K562 (cell line): ENCODE measurements at regions of chr12 and their contacts with region 1.

Region 1: DNA sequence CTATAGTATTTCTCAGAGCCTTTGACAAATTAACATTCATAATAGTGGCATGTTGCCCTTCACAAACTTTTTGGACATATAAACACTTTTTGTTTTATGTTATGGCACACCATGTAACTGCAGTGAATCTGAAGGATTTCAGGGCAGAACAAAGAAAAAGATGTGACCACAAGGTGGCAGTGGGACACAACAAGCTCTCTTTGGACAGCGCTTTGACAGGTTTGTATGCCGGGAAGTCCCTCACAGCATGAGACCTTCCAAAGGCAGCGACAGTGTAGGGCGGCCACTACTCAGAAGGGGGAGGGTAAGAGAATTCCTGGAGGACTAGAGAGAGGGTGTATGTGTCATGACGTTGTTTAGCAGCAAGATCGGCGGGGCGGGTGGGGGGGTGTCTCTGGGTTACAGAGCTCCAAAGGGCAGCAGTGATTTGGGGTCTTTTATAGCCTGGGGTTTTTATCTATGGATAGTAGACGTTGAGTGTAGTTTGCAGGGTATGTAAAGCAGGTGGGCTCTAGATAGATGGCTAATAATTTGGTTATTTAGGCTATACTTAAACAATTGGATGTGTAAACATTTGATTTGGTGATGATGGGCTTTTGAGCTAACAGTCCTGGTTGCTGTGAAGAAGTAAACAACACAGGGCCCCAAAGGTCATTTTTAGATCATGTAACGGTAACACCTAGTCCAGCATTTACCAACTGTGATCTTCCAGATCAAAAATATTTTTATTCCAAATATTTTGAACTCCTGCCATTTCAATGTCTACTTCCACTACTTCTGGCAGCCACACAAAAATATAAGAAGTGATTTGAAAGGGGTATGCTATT is 22.9 kb downstream of the ETFBKMT start:
- DNase-seq: peak; percentile 72 to 92 (median 75)
- ATAC-seq: peak; percentile 100
- H3K4me3 ChIP-seq: no peak overlapping the region
- H3K27ac ChIP-seq: no peak overlapping the region
- H3K4me1 ChIP-seq: no peaks in the 10 kb centered on the region
- H3K27me3 ChIP-seq: no peaks in the 10 kb centered on the region
- CTCF ChIP-seq: peak; percentile 81 to 88 (median 86)
- EP300 ChIP-seq: peak; percentile 12; the same call in 1 of the 2 replicates
- POLR2A ChIP-seq: no peak
- RAD21 ChIP-seq: peak; percentile 97 to 99

Region 2: GRCh38 chr12:31603546-31604009 is 78.8 kb before region 1 on chr12:
- CTCF ChIA-PET with region 1: no interaction called
- POLR2A ChIA-PET with region 1: no interaction called
- in situ Hi-C with region 1: no loop called
- intact Hi-C with region 1: no loop called
- DNase-seq: no peak
- ATAC-seq: no peak
- H3K4me3 ChIP-seq: no peak overlapping the region
- H3K27ac ChIP-seq: no peak overlapping the region
- H3K4me1 ChIP-seq: no peaks in the 10 kb centered on the region
- H3K27me3 ChIP-seq: no peaks in the 10 kb centered on the region
- CTCF ChIP-seq: no peak
- EP300 ChIP-seq: no peak
- POLR2A ChIP-seq: no peak
- RAD21 ChIP-seq: no peak

Region 3: DNA sequence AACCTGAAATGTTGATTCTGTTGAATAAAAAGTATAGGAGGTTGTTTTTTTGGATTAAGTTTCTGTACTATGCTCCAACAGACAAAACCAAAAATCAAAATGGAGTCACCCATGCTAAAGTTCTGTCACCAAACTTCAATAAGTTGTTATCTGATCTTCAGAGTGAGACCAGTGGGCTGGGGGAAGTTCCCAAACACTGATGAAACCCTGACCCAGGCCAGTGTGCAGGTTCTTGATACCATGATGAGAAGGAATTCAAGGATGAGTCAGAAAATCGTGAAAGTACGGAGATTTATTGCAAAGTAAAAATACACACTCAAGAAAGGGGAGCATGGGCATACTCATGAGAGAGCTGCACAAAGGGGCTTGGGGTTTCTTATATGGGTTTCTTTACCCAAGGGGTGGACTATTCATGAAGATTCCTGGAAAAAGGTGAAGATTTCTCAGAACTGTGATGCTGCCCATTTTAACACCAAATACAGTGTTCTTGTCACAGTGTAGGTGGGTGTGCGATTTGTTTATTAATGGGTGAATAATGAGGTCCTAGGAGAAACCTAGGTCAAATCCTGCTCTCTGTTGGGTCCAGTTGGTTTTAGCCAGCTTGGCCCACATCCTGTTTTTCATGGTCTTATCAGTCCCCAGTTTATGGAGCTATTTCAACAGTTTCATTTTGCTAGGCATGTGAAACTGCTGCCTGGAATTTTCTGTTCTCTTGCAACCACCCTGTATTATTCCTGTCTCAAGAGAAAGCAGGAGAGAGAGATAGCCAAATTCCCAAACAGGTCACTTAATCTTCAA is 63.9 kb before region 1 on chr12:
- CTCF ChIA-PET with region 1: no interaction called
- POLR2A ChIA-PET with region 1: no interaction called
- in situ Hi-C with region 1: no loop called
- intact Hi-C with region 1: no loop called
- DNase-seq: peak in 1 of 4 experiments; percentile 43
- ATAC-seq: peak; percentile 32
- H3K4me3 ChIP-seq: no peak overlapping the region
- H3K27ac ChIP-seq: no peak overlapping the region
- H3K4me1 ChIP-seq: peaks cover 0 to 12% of the 10 kb centered on the region in 2 experiments; a peak in 3 of 5 replicates
- H3K27me3 ChIP-seq: no peaks in the 10 kb centered on the region
- CTCF ChIP-seq: no peak
- EP300 ChIP-seq: no peak; the same call in none of the 2 replicates
- POLR2A ChIP-seq: no peak
- RAD21 ChIP-seq: peak in 1 of 2 experiments; percentile 35; a peak in 1 of 4 replicates

Region 4: GRCh38 chr12:31705621-31706020 is 23.3 kb after region 1 on chr12:
- CTCF ChIA-PET with region 1: no interaction called
- POLR2A ChIA-PET with region 1: no interaction called
- in situ Hi-C with region 1: no loop called
- intact Hi-C with region 1: no loop called
- DNase-seq: no peak
- ATAC-seq: no peak
- H3K4me3 ChIP-seq: no peak overlapping the region
- H3K27ac ChIP-seq: no peak overlapping the region
- H3K4me1 ChIP-seq: no peaks in the 10 kb centered on the region
- H3K27me3 ChIP-seq: no peaks in the 10 kb centered on the region
- CTCF ChIP-seq: no peak
- EP300 ChIP-seq: no peak
- POLR2A ChIP-seq: no peak
- RAD21 ChIP-seq: no peak

Region 5: GRCh38 chr12:31728917-31729640 is 46.7 kb after region 1 on chr12 and contains the start of gene AMN1:
- CTCF ChIA-PET with region 1: no interaction called
- POLR2A ChIA-PET with region 1: no interaction called
- in situ Hi-C with region 1: no loop called
- intact Hi-C with region 1: loop called (anchors 1 kb)
- DNase-seq: peak; percentile 92 to 100 (median 95)
- ATAC-seq: peak; percentile 89
- H3K4me3 ChIP-seq: peak within 1 kb of the TSS; percentile 70
- H3K27ac ChIP-seq: peak within 1 kb of the TSS; percentile 94
- H3K4me1 ChIP-seq: peaks cover 14 to 48% of the 10 kb centered on the region in 2 experiments
- H3K27me3 ChIP-seq: no peaks in the 10 kb centered on the region
- CTCF ChIP-seq: peak in 1 of 3 experiments; percentile 18; a peak in 1 of 6 replicates
- EP300 ChIP-seq: 0 out of 2 replicates have a peak, but pooled peaks have one; percentile 4
- POLR2A ChIP-seq: peak; percentile 87
- RAD21 ChIP-seq: peak; percentile 19 to 22; a peak in 3 of 4 replicates
- polyA plus RNA-seq, gene AMN1: 26.9 to 27.6 TPM

Region 6: DNA sequence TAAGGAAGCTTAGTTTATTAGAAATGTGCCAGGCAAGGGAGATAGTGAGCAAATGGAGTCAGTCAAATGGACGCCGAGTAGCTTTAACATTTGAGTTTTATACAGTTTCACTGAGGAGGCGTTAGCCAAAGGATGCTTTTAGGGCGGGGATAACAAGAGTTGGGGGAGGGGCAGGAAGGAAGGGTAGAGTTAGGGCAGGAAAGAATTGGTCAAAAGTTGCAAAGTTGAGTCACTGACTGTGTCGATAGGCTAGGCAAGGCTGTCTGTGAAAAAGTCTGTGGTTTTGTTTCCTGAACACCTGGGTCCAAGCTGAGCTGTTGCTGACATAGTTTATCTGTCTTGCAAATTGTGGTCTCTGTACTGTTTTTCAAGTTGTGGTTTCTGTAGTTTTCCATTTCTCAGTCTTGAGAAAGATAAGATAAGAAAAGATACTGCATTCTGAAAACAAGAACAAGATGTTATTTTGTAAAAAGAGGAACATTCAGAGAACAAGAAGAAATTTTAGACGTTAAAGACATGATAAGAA is 214.2 kb after region 1 on chr12:
- CTCF ChIA-PET with region 1: no interaction called
- POLR2A ChIA-PET with region 1: no interaction called
- in situ Hi-C with region 1: no loop called
- intact Hi-C with region 1: loop called (anchors 10 kb)
- DNase-seq: peak; percentile 42 to 84 (median 60)
- ATAC-seq: peak; percentile 84
- H3K4me3 ChIP-seq: no peak overlapping the region
- H3K27ac ChIP-seq: peak overlapping the region; percentile 27; the same call in 2 of the 3 replicates
- H3K4me1 ChIP-seq: peaks cover 19 to 21% of the 10 kb centered on the region in 2 experiments
- H3K27me3 ChIP-seq: no peaks in the 10 kb centered on the region
- CTCF ChIP-seq: no peak
- EP300 ChIP-seq: peak; percentile 83
- POLR2A ChIP-seq: no peak
- RAD21 ChIP-seq: peak; percentile 24 to 45; a peak in 3 of 4 replicates

Region 7: GRCh38 chr12:32049960-32050359 is 367.6 kb after region 1 on chr12:
- CTCF ChIA-PET with region 1: no interaction called
- POLR2A ChIA-PET with region 1: no interaction called
- in situ Hi-C with region 1: no loop called
- intact Hi-C with region 1: loop called (anchors 5 kb)
- DNase-seq: no peak
- ATAC-seq: no peak
- H3K4me3 ChIP-seq: no peak overlapping the region
- H3K27ac ChIP-seq: no peak overlapping the region
- H3K4me1 ChIP-seq: peaks cover 18 to 35% of the 10 kb centered on the region in 2 experiments
- H3K27me3 ChIP-seq: no peaks in the 10 kb centered on the region
- CTCF ChIP-seq: no peak
- EP300 ChIP-seq: no peak
- POLR2A ChIP-seq: no peak
- RAD21 ChIP-seq: no peak

Region 8: DNA sequence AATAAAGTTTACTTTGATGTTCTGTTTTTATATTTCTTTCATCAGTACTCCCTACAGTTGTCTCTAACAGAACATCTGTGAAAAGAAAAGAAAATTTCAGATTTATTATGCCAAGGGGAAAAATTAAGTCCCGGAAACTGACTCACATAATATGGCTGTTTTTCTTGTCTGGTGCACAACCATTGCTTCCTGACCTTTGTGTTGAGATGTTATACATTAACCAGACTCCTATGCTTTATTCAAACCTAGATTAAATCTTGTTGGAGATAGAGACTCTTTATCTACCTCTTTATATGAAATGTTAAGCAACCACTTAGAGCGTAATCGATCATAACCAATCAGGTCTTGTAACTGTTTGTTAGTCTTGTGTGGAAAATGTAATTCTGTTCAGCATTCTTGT is 386.7 kb after region 1 on chr12:
- CTCF ChIA-PET with region 1: no interaction called
- POLR2A ChIA-PET with region 1: no interaction called
- in situ Hi-C with region 1: no loop called
- intact Hi-C with region 1: no loop called
- DNase-seq: no peak
- ATAC-seq: no peak
- H3K4me3 ChIP-seq: no peak overlapping the region
- H3K27ac ChIP-seq: no peak overlapping the region
- H3K4me1 ChIP-seq: no peaks in the 10 kb centered on the region
- H3K27me3 ChIP-seq: no peaks in the 10 kb centered on the region
- CTCF ChIP-seq: no peak
- EP300 ChIP-seq: no peak
- POLR2A ChIP-seq: no peak
- RAD21 ChIP-seq: no peak

Region 9: GRCh38 chr12:32312049-32312670 is 629.8 kb after region 1 on chr12:
- CTCF ChIA-PET with region 1: interaction called, 7 read pairs
- POLR2A ChIA-PET with region 1: no interaction called
- in situ Hi-C with region 1: loop called (anchors 10 kb)
- intact Hi-C with region 1: loop called (anchors 2 kb)
- DNase-seq: peak in 2 of 4 experiments; percentile 37 to 60
- ATAC-seq: peak; percentile 73
- H3K4me3 ChIP-seq: no peak overlapping the region
- H3K27ac ChIP-seq: no peak overlapping the region
- H3K4me1 ChIP-seq: no peaks in the 10 kb centered on the region; a peak in 1 of 5 replicates
- H3K27me3 ChIP-seq: no peaks in the 10 kb centered on the region
- CTCF ChIP-seq: peak; percentile 57 to 87 (median 85)
- EP300 ChIP-seq: no peak
- POLR2A ChIP-seq: no peak
- RAD21 ChIP-seq: peak; percentile 73